Sciatic nerve (tissue), 2 donors: ENCODE measurements at regions of chr15 and their contacts with region 1.

Region 1: GRCh38 chr15:31215490-31216214 is 111.0 kb upstream of the KLF13 start:
- DNase-seq: peak; percentile 89
- ATAC-seq: peak; percentile 73

Region 2: GRCh38 chr15:31326156-31326732 is 110.6 kb after region 1 on chr15:
- intact Hi-C with region 1: loop called (anchors 10 kb)
- DNase-seq: peak; percentile 100
- ATAC-seq: peak; percentile 96

Region 3: DNA sequence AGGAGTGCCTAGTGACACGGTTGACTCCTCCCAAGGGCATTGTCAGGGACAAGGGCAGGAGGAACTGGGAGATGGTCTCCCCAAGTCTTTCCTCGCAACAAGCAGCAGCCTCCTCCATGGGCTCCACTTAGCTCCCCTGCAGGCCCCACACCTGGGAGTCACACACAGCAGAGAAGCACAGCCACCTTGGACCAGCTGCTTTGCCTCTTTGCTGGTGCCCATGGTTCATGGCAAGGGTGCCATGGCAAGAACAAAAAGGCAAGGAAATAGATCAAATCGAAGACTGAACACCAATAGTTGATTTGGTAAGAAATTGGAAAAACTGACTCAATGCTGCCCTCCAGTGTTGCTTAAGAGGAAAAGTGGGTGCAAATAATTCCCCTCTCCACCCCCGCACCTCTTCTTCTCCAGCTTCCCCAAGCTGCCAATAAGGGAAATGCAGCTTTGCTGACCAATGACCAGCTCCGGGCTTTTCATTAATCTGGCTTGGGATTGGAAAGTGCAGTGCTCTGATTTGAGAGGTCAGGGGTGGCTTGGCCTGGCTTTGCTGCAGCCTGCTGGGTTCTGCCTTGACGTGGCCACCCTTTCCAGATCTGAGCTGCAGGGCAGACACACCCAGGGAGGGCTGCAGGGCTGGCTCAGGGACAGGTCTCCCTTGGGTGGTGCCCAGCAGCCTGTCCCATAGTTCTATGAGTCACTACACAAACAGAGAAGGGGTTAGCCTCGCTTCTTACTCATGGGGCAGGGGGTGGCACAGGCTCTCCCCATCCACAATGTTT is 273.0 kb after region 1 on chr15:
- intact Hi-C with region 1: loop called (anchors 5 kb)
- DNase-seq: no peak
- ATAC-seq: peak; percentile 90